Uterus (tissue), 4 donors: ENCODE measurements at regions of chr3 and their contacts with region 1.

Region 1: DNA sequence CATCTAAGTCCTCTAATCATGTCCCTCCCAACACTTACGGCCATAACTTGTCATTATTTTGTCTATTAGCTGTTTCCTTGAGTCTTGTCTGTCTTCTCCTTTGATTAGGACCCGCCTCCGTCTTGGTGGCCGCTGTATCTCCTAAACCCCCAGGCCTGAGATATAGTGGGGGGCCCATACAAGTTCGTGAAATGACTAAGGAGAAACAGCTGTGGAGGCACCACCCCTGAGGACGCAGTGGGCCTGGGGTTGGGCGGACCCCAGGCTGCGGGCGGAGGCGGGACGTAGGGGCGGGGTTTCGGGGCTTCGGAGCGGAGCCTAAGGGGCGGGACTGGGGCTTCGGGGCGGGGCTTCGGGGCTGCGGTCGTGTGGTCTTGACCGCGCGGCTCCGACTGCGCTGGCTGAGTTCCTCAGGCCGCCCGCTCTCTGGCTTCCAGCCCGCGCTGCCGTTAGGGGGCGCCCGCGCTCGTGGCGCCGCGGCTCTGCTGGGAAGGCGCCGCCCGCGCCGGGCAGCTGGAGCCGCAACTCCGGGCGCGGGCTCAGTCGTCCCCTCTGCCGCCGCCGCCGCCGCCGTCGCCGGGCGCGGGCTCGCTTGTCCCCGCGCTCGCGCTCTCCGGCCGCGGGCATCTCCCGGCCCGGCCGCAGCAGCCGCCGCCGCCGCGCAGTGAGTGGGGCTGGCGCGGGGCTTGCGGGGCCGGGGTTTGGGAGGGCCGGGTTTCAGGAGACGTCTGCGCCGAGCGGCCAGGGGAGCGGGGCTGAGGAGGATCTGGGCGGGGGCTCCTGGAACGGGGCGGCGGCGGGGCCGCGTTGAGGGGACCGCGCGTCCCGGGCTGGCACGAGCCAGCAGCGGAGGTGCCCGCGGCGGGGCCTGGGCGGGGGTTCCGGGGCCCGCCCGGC is at the start of gene KCTD6:
- DNase-seq: peak; percentile 91 to 96
- H3K4me3 ChIP-seq: peak within 1 kb of the TSS; percentile 68 to 90
- H3K27ac ChIP-seq: peak within 1 kb of the TSS; percentile 90 to 91
- H3K4me1 ChIP-seq: peaks cover 14 to 20% of the 10 kb centered on the region in 2 donors
- H3K27me3 ChIP-seq: no peaks in the 10 kb centered on the region
- CTCF ChIP-seq: peak; percentile 54 to 93 (median 87)
- POLR2A ChIP-seq: peak; percentile 46 to 58
- total RNA-seq, gene KCTD6: 21.0 to 27.4 (median 24.3) TPM

Region 2: GRCh38 chr3:58332575-58333188 is 159.1 kb before region 1 on chr3 and contains the start of gene PXK:
- intact Hi-C with region 1: loop called (anchors 5 kb)
- DNase-seq: peak; percentile 74 to 84
- H3K4me3 ChIP-seq: peak within 1 kb of the TSS; percentile 61 to 96
- H3K27ac ChIP-seq: peak within 1 kb of the TSS; percentile 58 to 85
- H3K4me1 ChIP-seq: peaks cover 0 to 8% of the 10 kb centered on the region in 2 donors
- H3K27me3 ChIP-seq: no peaks in the 10 kb centered on the region
- CTCF ChIP-seq: peak in 3 of 4 experiments; percentile 13 to 59 (median 55)
- POLR2A ChIP-seq: peak; percentile 32 to 77
- total RNA-seq, gene PXK: 15.1 to 50.5 (median 41.1) TPM

Region 3: GRCh38 chr3:58544541-58544940 is 52.8 kb after region 1 on chr3:
- intact Hi-C with region 1: no loop called
- DNase-seq: no peak
- H3K4me3 ChIP-seq: no peak overlapping the region
- H3K27ac ChIP-seq: no peak overlapping the region
- H3K4me1 ChIP-seq: no peaks in the 10 kb centered on the region
- H3K27me3 ChIP-seq: no peaks in the 10 kb centered on the region
- CTCF ChIP-seq: no peak
- POLR2A ChIP-seq: no peak